ENCODE measurements at regions of chr16 and their contacts with region 1.

Region 1: DNA sequence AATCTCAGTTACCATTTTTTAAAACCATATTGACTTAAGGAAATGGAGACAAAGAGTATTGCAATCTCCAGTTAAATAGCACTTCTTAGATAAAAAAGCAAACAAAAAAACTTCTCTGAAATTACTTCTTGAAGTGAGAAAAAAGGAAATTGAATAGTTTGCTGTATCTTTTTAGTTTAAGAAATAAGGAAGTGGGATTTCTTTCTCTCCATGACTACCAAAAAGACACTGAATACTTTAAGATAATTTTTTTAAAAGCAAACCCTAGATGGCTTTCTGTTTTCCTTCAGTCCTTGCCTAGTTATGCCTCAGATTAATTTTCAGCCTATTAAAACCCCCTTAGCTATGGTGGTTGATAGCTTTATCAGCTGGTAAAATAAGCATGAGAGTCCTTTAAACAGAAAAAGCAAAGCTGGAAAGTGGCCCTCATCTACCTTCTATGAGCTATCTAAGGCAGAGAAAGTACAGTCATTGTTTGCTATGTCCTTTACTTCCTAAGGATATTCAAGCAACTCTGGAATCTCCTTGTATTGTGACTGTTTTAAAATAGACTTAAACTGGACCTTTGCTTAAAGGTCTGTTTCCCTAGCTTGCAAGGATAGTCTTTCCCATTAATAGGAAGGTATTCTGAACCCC is 28.6 kb downstream of the TPPP3 start:
- DNase-seq: no peak
- ATAC-seq: no peak
- H3K4me3 ChIP-seq: no peak overlapping the region
- H3K27ac ChIP-seq: peak overlapping the region in 4 of 10 donors; percentile 36 to 57 (median 52)
- H3K4me1 ChIP-seq: peaks cover 0 to 20% (median 3%) of the 10 kb centered on the region in 9 donors
- H3K27me3 ChIP-seq: peaks cover 0 to 6% (median 0%) of the 10 kb centered on the region in 7 donors
- CTCF ChIP-seq: no peak

Region 2: DNA sequence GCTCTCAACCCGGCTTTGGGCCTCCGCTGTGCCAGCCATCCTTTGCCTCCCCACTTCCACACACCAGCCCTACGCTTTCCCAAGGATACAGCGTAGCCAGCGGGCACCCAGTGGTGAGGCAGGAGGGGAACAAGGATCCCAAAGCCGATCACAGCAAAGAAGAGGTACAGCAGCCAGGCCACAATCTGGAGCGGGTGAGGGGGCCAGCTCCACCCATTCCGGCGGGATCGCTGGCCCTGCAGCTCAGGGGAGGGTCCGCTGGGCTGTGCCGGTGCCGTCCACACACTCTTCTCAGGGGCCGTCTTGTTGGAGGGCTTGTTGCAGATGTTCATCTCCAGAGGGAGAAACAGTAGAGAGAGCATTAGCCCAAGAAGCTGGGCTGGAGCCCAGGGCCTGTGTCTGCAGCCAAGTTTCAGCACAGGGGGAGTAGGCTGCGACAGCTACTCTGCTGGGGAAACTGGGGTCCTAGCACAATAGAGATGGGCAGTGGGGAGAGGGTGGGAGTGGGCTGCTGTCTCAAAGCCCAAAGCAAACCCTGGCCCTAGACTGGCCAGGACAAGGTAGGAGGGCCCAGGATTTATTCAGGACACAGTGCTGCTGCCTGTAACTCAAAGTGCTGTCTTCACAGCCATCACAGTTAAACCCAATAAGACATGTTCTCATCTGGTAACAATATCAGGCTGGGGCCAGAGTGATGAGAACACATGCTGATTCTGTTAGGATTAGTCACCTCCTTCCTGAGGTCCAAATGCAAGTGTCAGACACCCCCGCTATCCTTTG is 41.6 kb after region 1 on chr16:
- intact Hi-C with region 1: loop called in 1 of 10 experiments (anchors 5 kb)
- DNase-seq: peak in 1 of 2 donors; percentile 51
- ATAC-seq: peak; percentile 52 to 87 (median 80)
- H3K4me3 ChIP-seq: no peak overlapping the region
- H3K27ac ChIP-seq: peak overlapping the region in 9 of 10 donors; percentile 53 to 88 (median 78)
- H3K4me1 ChIP-seq: peaks cover 11 to 39% (median 22%) of the 10 kb centered on the region in 9 donors
- H3K27me3 ChIP-seq: no peaks in the 10 kb centered on the region
- CTCF ChIP-seq: no peak

Region 3: DNA sequence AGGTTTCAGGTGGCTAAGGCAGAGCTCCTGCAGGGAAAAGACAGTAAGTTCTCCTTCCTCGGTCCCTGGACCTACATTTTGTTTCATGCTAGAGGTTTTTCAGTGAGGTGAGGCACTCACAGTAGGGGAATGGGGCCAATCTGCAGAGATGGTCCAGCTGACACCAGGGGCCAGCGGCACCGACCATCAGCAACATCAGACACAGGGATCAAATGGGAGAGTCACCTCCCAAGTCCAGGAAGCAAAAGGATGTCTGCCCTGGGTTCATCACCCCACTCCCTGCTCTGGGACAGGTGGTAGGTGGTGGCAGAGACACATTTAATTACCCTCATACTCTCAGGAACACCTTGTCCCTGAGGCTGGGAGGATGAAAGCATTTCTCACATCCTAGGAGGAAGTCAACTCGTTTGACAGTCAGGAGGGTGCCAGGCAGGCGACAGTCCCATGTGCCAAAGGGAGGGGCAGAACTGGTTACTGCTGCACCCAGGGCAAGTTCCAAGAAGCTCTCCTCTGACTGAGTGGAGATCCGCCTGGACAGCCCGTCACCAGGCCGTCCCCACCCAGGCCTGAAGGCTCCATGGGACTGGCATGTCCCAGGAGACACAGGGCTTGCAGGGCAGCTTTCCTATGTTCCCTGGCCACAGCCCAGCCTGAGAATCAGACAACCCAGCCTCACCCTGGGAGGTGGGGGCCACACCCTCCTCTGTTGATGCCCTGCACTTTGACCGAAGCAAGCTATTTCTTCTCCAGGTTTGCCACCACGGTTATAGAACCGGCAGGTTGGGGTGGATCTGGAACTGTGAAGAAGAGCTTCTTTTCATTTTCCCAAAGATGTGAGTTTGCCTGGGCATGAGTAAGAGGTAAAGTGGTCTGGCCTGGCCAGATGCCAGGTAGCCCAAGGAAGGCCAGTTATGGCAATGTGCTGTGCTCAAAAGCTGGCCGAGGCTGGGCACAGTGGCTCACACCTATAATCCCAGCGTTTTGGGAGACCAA is 97.2 kb after region 1 on chr16:
- intact Hi-C with region 1: loop called in 1 of 10 experiments (anchors 10 kb)
- DNase-seq: no peak
- ATAC-seq: no peak
- H3K4me3 ChIP-seq: no peak overlapping the region
- H3K27ac ChIP-seq: no peak overlapping the region
- H3K4me1 ChIP-seq: peaks cover 48 to 90% (median 83%) of the 10 kb centered on the region in 9 donors
- H3K27me3 ChIP-seq: no peaks in the 10 kb centered on the region
- CTCF ChIP-seq: no peak

Measured in heart right ventricle (tissue), 16 donors.